Transverse colon (tissue), 4 donors: ENCODE measurements at regions of chr12 and their contacts with region 1.

Region 1: DNA sequence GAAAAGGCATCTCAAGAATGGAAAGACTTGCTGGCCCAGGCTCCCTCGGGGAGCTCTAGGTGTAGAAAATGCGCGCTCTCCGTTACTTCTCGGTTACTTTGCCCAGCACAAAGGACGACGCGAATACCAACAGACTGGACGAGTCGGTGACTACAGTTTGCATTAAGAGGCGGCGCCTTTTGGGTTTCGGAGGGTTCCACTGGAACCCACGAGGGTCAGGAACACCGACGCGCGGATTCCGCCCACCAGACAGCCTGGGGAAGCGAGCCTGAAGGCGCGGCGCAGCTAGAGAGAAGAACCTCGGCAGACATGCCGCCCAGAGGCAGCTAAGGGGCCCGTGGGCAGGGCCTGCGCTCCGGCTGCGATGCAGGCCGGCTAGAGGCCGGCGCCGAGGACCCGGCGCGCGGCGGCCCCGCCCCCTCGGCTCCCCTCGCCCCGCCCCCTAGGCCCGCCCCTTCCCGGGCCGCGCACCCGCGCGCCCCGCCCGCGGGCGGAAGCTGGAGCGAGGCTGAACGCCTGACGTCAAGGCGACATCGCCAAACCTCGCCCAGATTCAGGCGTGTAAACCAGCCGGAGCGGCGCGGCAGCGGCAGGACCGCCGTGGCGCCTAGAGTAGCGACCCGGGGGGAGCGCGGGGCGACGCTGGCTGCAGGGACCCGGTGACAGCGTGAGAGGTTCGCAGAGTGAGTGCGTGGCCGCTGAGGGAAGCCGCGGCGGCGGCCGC is at the start of gene RAP1B:
- DNase-seq: peak; percentile 92
- H3K4me3 ChIP-seq: peak within 1 kb of the TSS; percentile 44 to 94 (median 78)
- H3K27ac ChIP-seq: peak within 1 kb of the TSS; percentile 92 to 100 (median 97)
- H3K4me1 ChIP-seq: peaks cover 25 to 37% (median 36%) of the 10 kb centered on the region in 4 donors
- H3K27me3 ChIP-seq: no peaks in the 10 kb centered on the region
- CTCF ChIP-seq: no peak
- EP300 ChIP-seq: peak; percentile 50
- POLR2A ChIP-seq: peak; percentile 96
- total RNA-seq, gene RAP1B: 180 to 380 (median 224) TPM

Region 2: GRCh38 chr12:68358532-68359485 is 251.7 kb before region 1 on chr12:
- in situ Hi-C with region 1: loop called in 2 of 4 experiments (anchors 10 to 25 kb)
- intact Hi-C with region 1: loop called (anchors 10 kb)
- DNase-seq: peak; percentile 71
- H3K4me3 ChIP-seq: no peak overlapping the region
- H3K27ac ChIP-seq: peak overlapping the region; percentile 11 to 64 (median 30)
- H3K4me1 ChIP-seq: peaks cover 0 to 14% (median 7%) of the 10 kb centered on the region in 4 donors
- H3K27me3 ChIP-seq: no peaks in the 10 kb centered on the region
- CTCF ChIP-seq: peak; percentile 63 to 86 (median 67)
- EP300 ChIP-seq: no peak
- POLR2A ChIP-seq: no peak

Region 3: GRCh38 chr12:68364893-68365725 is 245.4 kb before region 1 on chr12:
- in situ Hi-C with region 1: loop called in 1 of 4 experiments (anchors 25 kb)
- intact Hi-C with region 1: loop called (anchors 10 kb)
- DNase-seq: peak; percentile 92
- H3K4me3 ChIP-seq: peak overlapping the region in 3 of 4 donors; percentile 7 to 43 (median 10)
- H3K27ac ChIP-seq: peak overlapping the region; percentile 80 to 88 (median 82)
- H3K4me1 ChIP-seq: peaks cover 0 to 27% (median 12%) of the 10 kb centered on the region in 4 donors
- H3K27me3 ChIP-seq: no peaks in the 10 kb centered on the region
- CTCF ChIP-seq: no peak
- EP300 ChIP-seq: no peak
- POLR2A ChIP-seq: peak; percentile 48

Region 4: GRCh38 chr12:68577949-68578348 is 32.6 kb before region 1 on chr12:
- in situ Hi-C with region 1: no loop called
- intact Hi-C with region 1: loop called (anchors 2 kb)
- DNase-seq: no peak
- H3K4me3 ChIP-seq: no peak overlapping the region
- H3K27ac ChIP-seq: no peak overlapping the region
- H3K4me1 ChIP-seq: no peaks in the 10 kb centered on the region
- H3K27me3 ChIP-seq: no peaks in the 10 kb centered on the region
- CTCF ChIP-seq: no peak
- EP300 ChIP-seq: no peak
- POLR2A ChIP-seq: no peak